ENCODE measurements at regions of chr2 and their contacts with region 1.

Region 1: GRCh38 chr2:215828517-215829184 is 184.7 kb downstream of the MREG start:
- DNase-seq: peak; percentile 28 to 74 (median 42)
- ATAC-seq: peak; percentile 74
- H3K4me3 ChIP-seq: no peak overlapping the region
- H3K27ac ChIP-seq: no peak overlapping the region
- H3K4me1 ChIP-seq: peaks cover 6 to 31% of the 10 kb centered on the region in 2 experiments; a peak in 3 of 5 replicates
- H3K27me3 ChIP-seq: no peaks in the 10 kb centered on the region
- CTCF ChIP-seq: peak; percentile 57 to 69 (median 65)
- EP300 ChIP-seq: no peak
- POLR2A ChIP-seq: no peak
- RAD21 ChIP-seq: peak; percentile 56 to 65

Region 2: DNA sequence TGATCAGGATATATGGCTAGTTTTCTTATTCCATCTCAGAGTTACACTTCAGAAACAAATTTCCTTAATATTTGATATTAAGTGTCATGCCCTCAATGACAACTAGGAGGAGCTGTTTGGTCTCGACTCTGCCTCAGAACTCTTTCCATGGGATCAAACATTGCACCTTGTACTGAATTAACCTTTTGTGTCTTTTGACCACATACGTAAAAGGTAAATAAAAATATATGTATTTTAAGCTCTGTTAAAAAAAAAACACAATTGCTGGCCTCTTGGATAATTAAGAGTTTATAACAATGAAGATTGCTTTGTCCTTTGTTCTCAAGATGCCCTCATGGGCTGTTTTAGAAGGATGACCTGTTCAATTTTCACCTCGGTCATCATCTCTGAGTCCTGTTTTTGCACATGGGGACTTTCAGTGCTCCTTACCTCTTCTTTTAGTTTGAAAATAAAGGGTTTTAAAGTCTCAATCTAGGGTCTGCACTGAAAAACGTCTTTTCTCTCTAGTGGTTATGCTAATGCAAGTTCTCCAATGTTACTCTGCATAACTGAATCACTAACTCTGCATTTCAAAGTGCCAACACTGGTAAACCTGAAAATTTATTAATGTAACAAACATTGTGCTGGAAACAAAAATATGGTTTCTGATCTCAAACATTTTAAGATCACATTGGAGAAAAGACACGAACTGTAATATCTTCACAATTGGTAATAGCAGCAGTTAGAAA is 374.0 kb before region 1 on chr2:
- CTCF ChIA-PET with region 1: no interaction called
- POLR2A ChIA-PET with region 1: no interaction called
- in situ Hi-C with region 1: no loop called
- intact Hi-C with region 1: loop called (anchors 2 kb)
- DNase-seq: peak; percentile 32 to 45 (median 44)
- ATAC-seq: peak; percentile 67
- H3K4me3 ChIP-seq: no peak overlapping the region
- H3K27ac ChIP-seq: no peak overlapping the region
- H3K4me1 ChIP-seq: no peaks in the 10 kb centered on the region
- H3K27me3 ChIP-seq: no peaks in the 10 kb centered on the region
- CTCF ChIP-seq: peak; percentile 45 to 72 (median 64); a peak in 5 of 6 replicates
- EP300 ChIP-seq: no peak
- POLR2A ChIP-seq: no peak
- RAD21 ChIP-seq: peak; percentile 74 to 79

Region 3: DNA sequence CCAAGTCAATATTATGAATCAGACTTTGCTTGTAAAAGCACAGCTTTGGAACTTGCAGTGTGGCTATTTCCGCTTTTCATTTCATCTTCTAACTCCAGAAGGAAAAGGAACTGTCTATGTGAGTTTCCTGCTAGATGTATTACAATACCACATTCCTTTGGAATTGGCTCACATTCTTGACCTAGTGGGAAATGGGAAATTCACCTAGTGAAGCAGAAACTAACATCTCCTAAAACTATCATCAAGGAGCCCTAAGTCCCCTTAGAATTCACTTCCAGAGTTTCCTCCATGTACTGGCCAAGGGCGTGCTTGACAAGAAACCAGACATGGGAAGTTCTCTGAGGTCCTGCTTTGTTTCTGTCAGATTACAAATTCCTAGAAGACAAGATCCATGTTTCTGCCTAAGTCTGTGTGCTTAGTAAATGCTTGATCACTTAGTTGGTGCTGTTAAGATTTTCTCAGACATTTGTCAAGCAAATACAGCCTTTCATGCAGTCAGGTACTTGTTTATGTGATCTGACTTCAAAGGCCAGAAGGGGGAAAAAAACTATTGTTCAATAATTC is 117.1 kb before region 1 on chr2:
- CTCF ChIA-PET with region 1: no interaction called
- POLR2A ChIA-PET with region 1: no interaction called
- in situ Hi-C with region 1: no loop called
- intact Hi-C with region 1: loop called (anchors 10 kb)
- DNase-seq: no peak
- ATAC-seq: no peak
- H3K4me3 ChIP-seq: no peak overlapping the region
- H3K27ac ChIP-seq: no peak overlapping the region
- H3K4me1 ChIP-seq: peaks cover 0 to 5% of the 10 kb centered on the region in 2 experiments; a peak in 1 of 5 replicates
- H3K27me3 ChIP-seq: no peaks in the 10 kb centered on the region
- CTCF ChIP-seq: no peak
- EP300 ChIP-seq: no peak
- POLR2A ChIP-seq: no peak
- RAD21 ChIP-seq: no peak

Region 4: DNA sequence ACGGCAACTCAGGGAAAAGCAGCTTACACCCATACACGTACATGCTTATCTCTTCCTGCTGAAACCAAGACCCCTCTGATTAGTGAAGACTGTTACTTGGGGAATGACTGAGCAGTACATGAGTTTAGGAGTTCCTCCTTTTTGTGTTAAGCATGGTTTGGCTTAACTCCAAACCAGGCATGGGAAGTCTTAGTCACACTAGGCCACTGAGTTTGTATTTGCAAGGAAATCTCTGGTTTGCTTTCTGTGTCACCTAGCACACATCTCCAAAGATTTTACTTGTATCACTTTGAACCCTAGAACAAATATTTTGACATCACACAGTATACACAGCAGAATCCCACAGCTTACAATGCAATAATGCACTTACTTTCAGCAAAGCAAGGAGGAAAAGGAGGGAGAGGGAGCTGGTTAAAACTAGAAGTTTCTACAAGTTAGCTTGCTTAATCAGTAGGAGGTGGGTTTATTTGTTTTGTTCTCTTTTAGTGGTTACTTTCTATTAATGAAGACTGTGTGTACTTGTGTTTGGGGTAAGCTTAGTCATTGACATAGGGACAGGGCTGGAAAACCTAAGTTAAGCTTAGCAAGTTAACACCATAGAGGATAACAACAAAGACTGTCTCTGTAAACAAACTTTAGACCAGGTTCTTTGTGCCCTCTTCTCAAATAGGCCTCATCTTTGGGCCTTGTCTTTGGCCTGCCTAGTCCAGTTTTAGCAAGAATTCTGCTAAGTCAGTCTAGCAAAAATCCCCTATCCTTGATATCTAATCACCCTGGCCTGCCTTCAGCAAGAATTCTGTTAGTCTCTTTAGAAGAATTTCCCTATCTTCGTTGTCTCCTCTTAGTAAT is 34.7 kb before region 1 on chr2:
- CTCF ChIA-PET with region 1: no interaction called
- POLR2A ChIA-PET with region 1: interaction called, 4 read pairs
- in situ Hi-C with region 1: no loop called
- intact Hi-C with region 1: loop called (anchors 2 kb)
- DNase-seq: peak; percentile 20 to 93 (median 47)
- ATAC-seq: peak; percentile 83
- H3K4me3 ChIP-seq: no peak overlapping the region
- H3K27ac ChIP-seq: peak overlapping the region; percentile 85
- H3K4me1 ChIP-seq: peaks cover 5 to 49% of the 10 kb centered on the region in 2 experiments; a peak in 4 of 5 replicates
- H3K27me3 ChIP-seq: no peaks in the 10 kb centered on the region
- CTCF ChIP-seq: no peak
- EP300 ChIP-seq: peak; percentile 89
- POLR2A ChIP-seq: no peak
- RAD21 ChIP-seq: 0 out of 4 replicates have a peak, but pooled peaks of 1 of the 2 experiments have one; percentile 16

Region 5: DNA sequence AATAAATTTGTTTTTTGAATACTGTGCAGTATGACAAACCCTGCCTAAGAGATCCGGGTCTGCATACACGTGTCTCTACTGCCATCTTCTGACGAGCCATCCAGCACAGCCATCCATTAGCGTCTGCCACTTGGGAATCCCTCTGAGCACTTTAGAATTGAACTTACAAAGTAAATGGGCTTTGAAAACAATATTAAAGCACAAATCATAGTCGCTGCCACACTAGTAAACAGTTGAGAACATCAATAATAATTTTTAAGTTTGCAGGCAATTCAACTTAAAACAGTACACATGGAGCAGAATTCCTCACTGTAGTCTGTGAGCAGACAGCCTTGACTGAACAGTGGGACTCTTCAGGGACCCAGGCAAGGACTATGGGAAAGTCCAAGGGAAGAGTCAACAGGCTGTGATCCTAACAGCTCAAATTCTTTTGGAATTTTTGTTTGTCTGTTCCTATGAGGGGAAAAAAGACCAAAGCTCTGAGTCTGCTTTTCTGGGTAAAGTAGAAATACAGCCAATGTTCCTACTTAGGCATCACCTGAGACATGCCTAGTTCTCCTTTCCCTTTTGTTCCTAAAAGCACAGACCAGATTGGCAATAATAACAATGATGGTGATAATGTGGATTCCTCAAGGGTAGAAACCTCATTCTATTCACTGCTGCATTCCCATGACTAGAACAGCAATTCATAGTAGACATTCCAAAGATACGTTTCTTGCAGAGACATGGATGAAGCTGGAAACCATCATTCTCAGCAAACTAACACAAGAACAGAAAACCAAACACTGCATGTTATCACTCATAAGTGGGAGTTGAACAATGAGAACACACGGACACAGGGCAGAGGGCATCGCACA is 91.8 kb after region 1 on chr2:
- CTCF ChIA-PET with region 1: no interaction called
- POLR2A ChIA-PET with region 1: no interaction called
- in situ Hi-C with region 1: no loop called
- intact Hi-C with region 1: loop called (anchors 2 kb)
- DNase-seq: peak; percentile 37 to 71 (median 38)
- ATAC-seq: peak; percentile 99
- H3K4me3 ChIP-seq: no peak overlapping the region
- H3K27ac ChIP-seq: no peak overlapping the region
- H3K4me1 ChIP-seq: no peaks in the 10 kb centered on the region; a peak in 1 of 5 replicates
- H3K27me3 ChIP-seq: no peaks in the 10 kb centered on the region
- CTCF ChIP-seq: peak; percentile 74 to 79 (median 76)
- EP300 ChIP-seq: no peak
- POLR2A ChIP-seq: no peak
- RAD21 ChIP-seq: peak; percentile 90 to 91

Measured in K562 (cell line).